CD4-positive, alpha-beta T cell (primary cell): ENCODE measurements at regions of chr2 and their contacts with region 1.

Region 1: GRCh38 chr2:208334230-208334629 is 68.2 kb downstream of the PIKFYVE start:
- DNase-seq: no peak
- ATAC-seq: no peak
- H3K4me3 ChIP-seq: no peak overlapping the region
- H3K4me3 Mint-ChIP-seq: no peak overlapping the region
- H3K27ac ChIP-seq: no peak overlapping the region
- H3K27ac Mint-ChIP-seq: peak overlapping the region; percentile 40
- H3K4me1 ChIP-seq: no peaks in the 10 kb centered on the region
- H3K4me1 Mint-ChIP-seq: no peaks in the 10 kb centered on the region
- H3K27me3 ChIP-seq: no peaks in the 10 kb centered on the region
- H3K27me3 Mint-ChIP-seq: no peaks in the 10 kb centered on the region
- CTCF ChIP-seq: no peak

Region 2: GRCh38 chr2:208072250-208072892 is 261.9 kb before region 1 on chr2:
- CTCF ChIA-PET with region 1: no interaction called
- POLR2A ChIA-PET with region 1: no interaction called
- intact Hi-C with region 1: no loop called
- DNase-seq: peak; percentile 21 to 73 (median 42)
- ATAC-seq: peak; percentile 70
- H3K4me3 ChIP-seq: no peak overlapping the region
- H3K4me3 Mint-ChIP-seq: no peak overlapping the region
- H3K27ac ChIP-seq: no peak overlapping the region
- H3K27ac Mint-ChIP-seq: no peak overlapping the region
- H3K4me1 ChIP-seq: no peaks in the 10 kb centered on the region
- H3K4me1 Mint-ChIP-seq: no peaks in the 10 kb centered on the region
- H3K27me3 ChIP-seq: no peaks in the 10 kb centered on the region
- H3K27me3 Mint-ChIP-seq: peaks cover 16% of the 10 kb centered on the region
- CTCF ChIP-seq: peak; percentile 76

Region 3: DNA sequence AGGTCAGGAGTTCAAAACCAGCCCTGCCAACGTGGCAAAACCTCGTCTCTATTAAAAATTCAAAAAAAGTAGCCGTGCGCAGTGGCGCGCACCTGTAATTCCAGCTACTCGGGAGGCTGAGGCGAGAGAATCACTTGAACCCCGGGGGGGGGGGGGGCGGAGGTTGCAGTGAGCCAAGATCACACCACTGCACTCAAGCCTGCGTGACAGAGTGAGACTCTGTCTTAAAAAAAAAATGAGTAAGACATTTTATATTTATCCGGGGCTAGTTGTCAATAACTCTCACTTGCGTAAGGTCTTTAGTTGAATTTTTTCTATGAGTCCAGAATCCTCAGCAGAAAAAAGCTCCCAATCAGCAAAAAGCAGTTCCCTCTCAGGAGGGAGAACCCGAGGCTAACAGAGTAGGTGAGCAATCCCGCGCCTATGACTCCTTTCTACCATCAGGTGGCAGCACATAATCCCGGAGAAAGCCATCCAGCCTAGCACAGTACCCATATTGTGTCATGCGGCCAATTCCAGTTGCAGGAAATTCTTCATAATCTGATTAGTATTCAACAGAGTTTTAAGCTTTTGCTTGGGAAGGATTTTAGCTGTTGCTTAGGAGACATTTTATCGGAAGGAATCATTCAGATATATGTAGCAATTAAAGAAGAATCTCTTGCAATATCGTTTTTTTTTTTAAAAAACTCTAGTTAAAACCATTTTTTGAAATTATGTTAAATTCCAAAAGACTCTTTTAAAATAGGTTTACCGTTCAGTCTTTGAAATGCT is 159.0 kb before region 1 on chr2:
- CTCF ChIA-PET with region 1: no interaction called
- POLR2A ChIA-PET with region 1: no interaction called
- intact Hi-C with region 1: loop called in 1 of 2 experiments (anchors 10 kb)
- DNase-seq: peak; percentile 27 to 75 (median 46)
- ATAC-seq: peak; percentile 99
- H3K4me3 ChIP-seq: no peak overlapping the region
- H3K4me3 Mint-ChIP-seq: no peak overlapping the region
- H3K27ac ChIP-seq: no peak overlapping the region
- H3K27ac Mint-ChIP-seq: no peak overlapping the region
- H3K4me1 ChIP-seq: no peaks in the 10 kb centered on the region
- H3K4me1 Mint-ChIP-seq: peaks cover 5% of the 10 kb centered on the region
- H3K27me3 ChIP-seq: peaks cover 0 to 15% of the 10 kb centered on the region in 2 experiments
- H3K27me3 Mint-ChIP-seq: peaks cover 12% of the 10 kb centered on the region
- CTCF ChIP-seq: peak; percentile 86